CD4-positive, alpha-beta T cell (primary cell): ENCODE measurements at regions of chr5 and their contacts with region 1.

Region 1: GRCh38 chr5:54310433-54311175 is at the start of gene ARL15:
- DNase-seq: peak; percentile 97 to 99 (median 98)
- ATAC-seq: peak; percentile 93
- H3K4me3 ChIP-seq: peak within 1 kb of the TSS; percentile 86
- H3K4me3 Mint-ChIP-seq: peak within 1 kb of the TSS; percentile 99
- H3K27ac ChIP-seq: peak within 1 kb of the TSS; percentile 53 to 59
- H3K27ac Mint-ChIP-seq: peak within 1 kb of the TSS; percentile 94
- H3K4me1 ChIP-seq: peaks cover 11% of the 10 kb centered on the region
- H3K4me1 Mint-ChIP-seq: peaks cover 35% of the 10 kb centered on the region
- H3K27me3 ChIP-seq: no peaks in the 10 kb centered on the region
- H3K27me3 Mint-ChIP-seq: peaks cover 23% of the 10 kb centered on the region
- CTCF ChIP-seq: no peak
- total RNA-seq, gene ARL15: 9.1 to 10.6 TPM

Region 2: DNA sequence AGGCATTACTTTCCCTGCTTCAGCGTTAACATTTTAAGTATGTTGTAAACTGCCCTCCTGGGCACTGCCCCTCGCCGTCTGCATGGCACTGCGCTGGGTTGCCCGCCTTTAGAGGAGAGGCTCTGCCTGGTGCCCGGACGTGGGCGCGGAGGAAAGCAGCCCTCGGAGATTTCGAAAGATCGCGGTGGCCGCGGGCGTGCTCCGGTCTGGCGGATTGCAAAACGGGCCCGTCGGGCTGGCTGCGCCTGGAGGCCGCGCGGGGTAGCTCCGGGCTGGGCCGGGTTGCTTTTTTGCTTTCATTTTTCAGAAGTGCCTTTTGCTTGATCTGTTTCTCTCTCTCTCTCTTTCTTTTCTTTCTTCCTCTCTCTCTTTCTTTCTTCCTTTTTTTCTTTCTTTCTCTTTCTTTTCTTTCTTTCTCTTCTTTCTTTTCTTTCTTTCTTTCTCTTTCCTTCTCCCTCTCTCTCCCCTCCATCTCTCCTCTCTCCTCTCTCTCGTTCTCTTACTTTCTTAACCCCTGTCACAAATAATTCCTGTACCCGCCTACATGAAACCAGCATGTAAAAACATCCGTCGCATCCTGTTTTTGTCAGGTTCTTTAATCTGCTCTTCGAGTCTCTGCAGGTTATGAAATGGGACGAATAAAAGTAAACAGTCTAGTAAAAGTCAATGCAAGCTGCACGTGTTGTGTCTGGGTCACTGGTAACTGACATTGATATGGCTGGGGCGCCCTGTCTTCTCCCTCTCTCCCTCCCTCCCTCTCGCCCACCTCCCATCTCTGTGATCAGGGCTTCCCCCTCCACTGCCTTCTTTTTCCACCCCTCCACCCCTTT is 828.5 kb before region 1 on chr5:
- CTCF ChIA-PET with region 1: no interaction called
- POLR2A ChIA-PET with region 1: no interaction called
- intact Hi-C with region 1: loop called in 1 of 2 experiments (anchors 10 kb)
- DNase-seq: peak in 12 of 14 experiments; percentile 17 to 72 (median 40)
- ATAC-seq: peak; percentile 70
- H3K4me3 ChIP-seq: peak overlapping the region; percentile 56
- H3K4me3 Mint-ChIP-seq: peak overlapping the region; percentile 93
- H3K27ac ChIP-seq: no peak overlapping the region
- H3K27ac Mint-ChIP-seq: peak overlapping the region; percentile 53
- H3K4me1 ChIP-seq: peaks cover 40% of the 10 kb centered on the region
- H3K4me1 Mint-ChIP-seq: peaks cover 46% of the 10 kb centered on the region
- H3K27me3 ChIP-seq: peaks cover 30 to 40% of the 10 kb centered on the region in 2 experiments
- H3K27me3 Mint-ChIP-seq: peaks cover 67% of the 10 kb centered on the region
- CTCF ChIP-seq: no peak

Region 3: GRCh38 chr5:54415896-54416601 is 105.4 kb after region 1 on chr5:
- CTCF ChIA-PET with region 1: interaction called, 4 read pairs
- POLR2A ChIA-PET with region 1: interaction called, 4 read pairs
- intact Hi-C with region 1: loop called in 1 of 2 experiments (anchors 1 kb)
- DNase-seq: no peak
- ATAC-seq: no peak
- H3K4me3 ChIP-seq: no peak overlapping the region
- H3K4me3 Mint-ChIP-seq: no peak overlapping the region
- H3K27ac ChIP-seq: no peak overlapping the region
- H3K27ac Mint-ChIP-seq: no peak overlapping the region
- H3K4me1 ChIP-seq: no peaks in the 10 kb centered on the region
- H3K4me1 Mint-ChIP-seq: no peaks in the 10 kb centered on the region
- H3K27me3 ChIP-seq: no peaks in the 10 kb centered on the region
- H3K27me3 Mint-ChIP-seq: peaks cover 6% of the 10 kb centered on the region
- CTCF ChIP-seq: no peak

Region 4: GRCh38 chr5:54517174-54518092 is 206.8 kb after region 1 on chr5 and contains the start of gene SNX18:
- CTCF ChIA-PET with region 1: interaction called, 5 read pairs
- POLR2A ChIA-PET with region 1: interaction called, 3 read pairs
- intact Hi-C with region 1: loop called (anchors 1 to 5 kb)
- DNase-seq: peak; percentile 84 to 97 (median 91)
- ATAC-seq: peak; percentile 90
- H3K4me3 ChIP-seq: peak within 1 kb of the TSS; percentile 69
- H3K4me3 Mint-ChIP-seq: peak within 1 kb of the TSS; percentile 87
- H3K27ac ChIP-seq: peak within 1 kb of the TSS in 1 of 2 donors; percentile 61
- H3K27ac Mint-ChIP-seq: peak within 1 kb of the TSS; percentile 70
- H3K4me1 ChIP-seq: peaks cover 40% of the 10 kb centered on the region
- H3K4me1 Mint-ChIP-seq: peaks cover 34% of the 10 kb centered on the region
- H3K27me3 ChIP-seq: no peaks in the 10 kb centered on the region
- H3K27me3 Mint-ChIP-seq: peaks cover 4% of the 10 kb centered on the region
- CTCF ChIP-seq: peak; percentile 95
- total RNA-seq, gene SNX18: 10.1 to 10.3 TPM

Region 5: GRCh38 chr5:54844905-54845566 is 534.4 kb after region 1 on chr5:
- CTCF ChIA-PET with region 1: no interaction called
- POLR2A ChIA-PET with region 1: no interaction called
- intact Hi-C with region 1: loop called in 1 of 2 experiments (anchors 5 kb)
- DNase-seq: peak in 3 of 14 experiments; percentile 62 to 73 (median 71)
- ATAC-seq: no peak
- H3K4me3 ChIP-seq: peak overlapping the region; percentile 3
- H3K4me3 Mint-ChIP-seq: peak overlapping the region; percentile 60
- H3K27ac ChIP-seq: no peak overlapping the region
- H3K27ac Mint-ChIP-seq: no peak overlapping the region
- H3K4me1 ChIP-seq: peaks cover 2% of the 10 kb centered on the region
- H3K4me1 Mint-ChIP-seq: no peaks in the 10 kb centered on the region
- H3K27me3 ChIP-seq: peaks cover 3 to 4% of the 10 kb centered on the region in 2 experiments
- H3K27me3 Mint-ChIP-seq: peaks cover 16% of the 10 kb centered on the region
- CTCF ChIP-seq: peak; percentile 77

Region 6: GRCh38 chr5:55534436-55535198 is 1224.0 kb after region 1 on chr5 and contains the start of gene PLPP1:
- CTCF ChIA-PET with region 1: no interaction called
- POLR2A ChIA-PET with region 1: no interaction called
- intact Hi-C with region 1: loop called in 1 of 2 experiments (anchors 10 kb)
- DNase-seq: peak; percentile 65 to 93 (median 78)
- ATAC-seq: peak; percentile 82
- H3K4me3 ChIP-seq: peak within 1 kb of the TSS; percentile 74
- H3K4me3 Mint-ChIP-seq: peak within 1 kb of the TSS; percentile 85
- H3K27ac ChIP-seq: peak within 1 kb of the TSS; percentile 60 to 85
- H3K27ac Mint-ChIP-seq: peak within 1 kb of the TSS; percentile 83
- H3K4me1 ChIP-seq: peaks cover 25% of the 10 kb centered on the region
- H3K4me1 Mint-ChIP-seq: peaks cover 48% of the 10 kb centered on the region
- H3K27me3 ChIP-seq: no peaks in the 10 kb centered on the region
- H3K27me3 Mint-ChIP-seq: no peaks in the 10 kb centered on the region
- CTCF ChIP-seq: no peak
- total RNA-seq, gene PLPP1: 2.9 to 3.0 TPM